ENCODE measurements at regions of chr7 and their contacts with region 1.

Region 1: DNA sequence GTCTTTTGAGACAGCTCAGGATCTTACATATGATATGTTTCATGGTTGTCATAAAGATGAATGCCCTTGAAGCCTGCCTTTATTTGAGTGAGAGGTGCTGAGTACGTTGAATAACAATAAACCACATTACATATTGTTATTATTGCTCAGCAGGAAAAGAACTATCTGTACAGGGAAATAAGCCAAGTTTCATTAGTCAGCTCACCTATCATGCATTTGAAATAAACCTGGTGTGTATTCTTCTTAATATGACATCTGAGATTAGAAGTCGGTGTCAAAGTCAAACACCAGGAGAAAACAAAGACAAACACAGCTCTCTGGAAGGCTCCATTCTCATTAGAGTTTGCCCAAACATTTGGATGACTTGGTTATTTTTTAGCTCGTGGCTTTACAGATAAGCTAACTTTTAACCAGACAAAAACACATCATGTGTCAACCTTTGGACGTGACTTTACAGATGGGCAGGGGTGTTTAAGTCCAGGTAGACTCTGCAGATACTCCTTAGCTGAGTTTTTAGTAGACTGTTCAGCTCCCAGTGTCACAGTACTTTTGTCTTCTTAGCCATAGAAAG is 71.2 kb upstream of the AOAH start:
- DNase-seq: no peak
- H3K4me3 ChIP-seq: no peak overlapping the region
- H3K27ac ChIP-seq: no peak overlapping the region
- H3K4me1 ChIP-seq: no peaks in the 10 kb centered on the region
- H3K27me3 ChIP-seq: no peaks in the 10 kb centered on the region
- CTCF ChIP-seq: no peak
- POLR2A ChIP-seq: no peak

Region 2: GRCh38 chr7:36692456-36692855 is 103.1 kb before region 1 on chr7:
- CTCF ChIA-PET with region 1: no interaction called
- POLR2A ChIA-PET with region 1: no interaction called
- dilution Hi-C with region 1: no loop called
- intact Hi-C with region 1: no loop called
- DNase-seq: no peak
- H3K4me3 ChIP-seq: no peak overlapping the region
- H3K27ac ChIP-seq: no peak overlapping the region
- H3K4me1 ChIP-seq: no peaks in the 10 kb centered on the region
- H3K27me3 ChIP-seq: peaks cover 0 to 2% of the 10 kb centered on the region in 2 experiments
- CTCF ChIP-seq: no peak
- POLR2A ChIP-seq: no peak

Region 3: GRCh38 chr7:36763132-36763816 is 32.3 kb before region 1 on chr7:
- CTCF ChIA-PET with region 1: no interaction called
- POLR2A ChIA-PET with region 1: interaction called, 10 read pairs
- dilution Hi-C with region 1: no loop called
- intact Hi-C with region 1: no loop called
- DNase-seq: no peak
- H3K4me3 ChIP-seq: no peak overlapping the region
- H3K27ac ChIP-seq: no peak overlapping the region
- H3K4me1 ChIP-seq: no peaks in the 10 kb centered on the region
- H3K27me3 ChIP-seq: no peaks in the 10 kb centered on the region
- CTCF ChIP-seq: no peak
- POLR2A ChIP-seq: no peak

Region 4: DNA sequence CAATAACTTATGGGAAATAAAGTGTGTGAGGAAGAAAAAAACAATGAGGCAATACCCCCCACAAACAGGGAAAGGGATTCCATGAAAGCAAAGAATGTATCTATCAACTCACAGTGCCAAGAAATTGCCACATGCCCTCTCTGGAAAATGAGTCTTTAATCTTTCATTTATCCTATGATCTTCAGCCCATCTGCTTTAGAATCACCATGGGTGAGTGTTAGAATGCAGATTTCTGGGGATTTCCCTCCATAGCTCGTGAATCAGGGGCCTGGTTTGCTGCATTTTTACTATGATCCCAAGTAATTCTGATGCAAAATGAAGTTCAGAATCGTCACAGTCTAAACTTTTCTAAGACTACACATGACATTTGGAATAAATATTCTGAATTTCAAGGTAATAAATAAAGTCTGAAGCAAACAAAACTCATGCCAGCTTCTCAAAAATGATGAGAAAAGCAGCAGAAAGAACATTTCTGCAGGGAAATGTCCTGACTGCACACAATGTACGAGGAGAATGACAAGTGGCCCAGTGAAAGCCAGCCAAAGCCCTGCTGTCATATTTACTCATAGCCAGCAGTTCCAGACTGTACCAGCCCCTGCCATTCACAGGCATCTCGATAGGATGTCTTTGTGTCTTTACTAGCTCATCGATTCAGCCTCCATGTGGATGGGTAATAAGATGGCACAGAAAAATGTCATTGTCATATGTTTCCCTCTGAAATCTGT is 486.0 kb after region 1 on chr7:
- CTCF ChIA-PET with region 1: no interaction called
- POLR2A ChIA-PET with region 1: no interaction called
- dilution Hi-C with region 1: no loop called
- intact Hi-C with region 1: no loop called
- DNase-seq: no peak
- H3K4me3 ChIP-seq: no peak overlapping the region
- H3K27ac ChIP-seq: no peak overlapping the region
- H3K4me1 ChIP-seq: peaks cover 8% of the 10 kb centered on the region
- H3K27me3 ChIP-seq: no peaks in the 10 kb centered on the region
- CTCF ChIP-seq: no peak
- POLR2A ChIP-seq: no peak

Measured in endothelial cell of umbilical vein (primary cell).